Activated naive CD4-positive, alpha-beta T cell treated with anti-CD3 and anti-CD28 coated beads for 36 hours (primary cell): ENCODE measurements at regions of chr9 and their contacts with region 1.

Region 1: GRCh38 chr9:5582835-5583195 is 46.1 kb upstream of the RIC1 start:
- DNase-seq: peak; percentile 72
- H3K4me3 Mint-ChIP-seq: peak overlapping the region; percentile 27
- H3K27ac Mint-ChIP-seq: peak overlapping the region; percentile 78
- H3K4me1 Mint-ChIP-seq: peaks cover 66% of the 10 kb centered on the region
- H3K27me3 Mint-ChIP-seq: no peaks in the 10 kb centered on the region

Region 2: DNA sequence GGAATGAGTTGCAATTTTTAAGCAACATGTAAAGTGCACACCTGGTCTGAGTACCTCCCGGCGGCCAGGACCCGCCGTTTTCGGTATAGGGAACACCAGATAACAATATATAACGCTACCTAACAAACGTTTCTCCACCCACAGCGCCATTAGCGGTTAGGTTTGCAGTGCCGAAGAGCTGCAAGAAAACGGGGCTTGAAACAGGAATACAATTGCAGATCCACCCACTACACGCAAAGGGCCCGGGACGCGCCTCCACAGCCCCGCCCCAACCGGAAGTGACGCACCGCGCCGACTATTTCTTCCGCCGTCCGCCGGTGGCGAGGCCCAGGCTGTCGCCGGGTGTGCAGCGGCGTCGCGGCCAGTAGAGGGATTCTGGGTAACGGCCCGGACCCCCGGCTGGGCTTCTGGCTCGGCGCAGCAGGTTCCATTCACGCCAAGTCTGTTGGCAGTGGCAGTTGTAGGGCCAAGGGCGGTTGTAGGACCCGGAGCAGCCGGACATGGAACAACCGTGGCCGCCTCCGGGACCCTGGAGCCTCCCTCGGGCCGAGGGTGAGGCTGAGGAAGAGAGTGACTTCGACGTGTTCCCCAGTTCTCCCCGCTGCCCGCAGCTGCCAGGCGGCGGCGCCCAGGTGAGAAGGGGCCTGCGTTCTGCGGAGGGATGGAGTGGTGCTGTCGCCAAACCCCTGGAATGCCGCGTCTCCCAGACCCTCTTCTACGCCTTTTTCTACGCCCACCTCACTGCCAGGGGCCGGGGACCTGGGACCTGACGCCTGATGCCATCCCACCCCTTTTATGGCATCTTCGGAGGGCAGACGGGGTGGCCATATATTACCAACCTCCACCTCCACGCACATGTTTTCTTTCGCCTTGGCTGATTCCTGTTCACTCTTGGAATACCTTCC is 903.3 kb before region 1 on chr9 and contains the start of gene CDC37L1:
- CTCF ChIA-PET with region 1: no interaction called
- intact Hi-C with region 1: loop called (anchors 10 kb)
- DNase-seq: peak; percentile 99
- H3K4me3 Mint-ChIP-seq: no peak within 1 kb of the TSS
- H3K27ac Mint-ChIP-seq: no peak within 1 kb of the TSS
- H3K4me1 Mint-ChIP-seq: peaks cover 17% of the 10 kb centered on the region
- H3K27me3 Mint-ChIP-seq: no peaks in the 10 kb centered on the region
- total RNA-seq, gene CDC37L1: 13.7 to 14.5 TPM

Region 3: DNA sequence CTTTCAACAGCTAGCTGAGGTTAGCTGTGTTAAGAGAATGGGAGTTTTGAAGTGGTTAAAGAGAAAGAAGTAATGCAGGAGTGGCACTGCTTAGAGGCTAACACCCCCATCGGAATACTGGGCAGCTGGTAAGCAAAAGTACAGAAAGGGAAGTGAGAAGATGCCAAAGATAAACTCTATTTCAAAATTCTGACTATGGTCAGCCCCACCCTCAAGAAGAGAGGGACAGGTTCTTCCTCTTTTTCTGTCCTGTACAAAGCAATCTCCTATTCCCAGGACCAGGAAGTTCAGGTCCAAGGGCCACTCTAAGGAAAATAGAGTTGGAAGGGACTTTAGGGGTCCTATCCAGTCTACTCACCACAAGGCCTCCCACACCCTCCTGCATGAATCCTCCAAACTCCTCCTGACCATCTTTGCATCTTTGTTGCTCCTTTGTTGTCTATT is 643.7 kb before region 1 on chr9:
- CTCF ChIA-PET with region 1: no interaction called
- intact Hi-C with region 1: loop called (anchors 5 kb)
- DNase-seq: no peak
- H3K4me3 Mint-ChIP-seq: no peak overlapping the region
- H3K27ac Mint-ChIP-seq: peak overlapping the region; percentile 88
- H3K4me1 Mint-ChIP-seq: peaks cover 79% of the 10 kb centered on the region
- H3K27me3 Mint-ChIP-seq: no peaks in the 10 kb centered on the region

Region 4: DNA sequence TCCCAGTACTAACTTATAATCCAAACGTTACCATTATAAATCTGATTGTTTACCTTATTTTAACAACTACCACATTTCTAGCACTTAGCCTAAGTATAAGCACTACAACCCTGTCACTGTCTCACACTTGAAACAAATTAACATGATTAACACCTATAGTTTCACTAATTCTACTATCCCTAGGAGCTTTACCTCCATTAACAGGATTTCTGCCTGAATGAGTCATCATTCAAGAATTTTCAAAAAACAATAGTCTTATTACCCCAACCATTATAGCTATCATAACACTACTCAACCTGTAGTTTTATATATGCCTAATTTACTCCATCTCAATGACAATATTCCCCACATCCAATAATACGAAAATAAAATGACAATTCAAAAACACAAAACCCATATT is 487.0 kb before region 1 on chr9:
- CTCF ChIA-PET with region 1: no interaction called
- intact Hi-C with region 1: no loop called
- DNase-seq: no peak
- H3K4me3 Mint-ChIP-seq: no peak overlapping the region
- H3K27ac Mint-ChIP-seq: no peak overlapping the region
- H3K4me1 Mint-ChIP-seq: no peaks in the 10 kb centered on the region
- H3K27me3 Mint-ChIP-seq: no peaks in the 10 kb centered on the region

Region 5: GRCh38 chr9:5110867-5111713 is 471.7 kb before region 1 on chr9:
- CTCF ChIA-PET with region 1: no interaction called
- intact Hi-C with region 1: no loop called
- DNase-seq: no peak
- H3K4me3 Mint-ChIP-seq: no peak overlapping the region
- H3K27ac Mint-ChIP-seq: no peak overlapping the region
- H3K4me1 Mint-ChIP-seq: no peaks in the 10 kb centered on the region
- H3K27me3 Mint-ChIP-seq: no peaks in the 10 kb centered on the region

Region 6: DNA sequence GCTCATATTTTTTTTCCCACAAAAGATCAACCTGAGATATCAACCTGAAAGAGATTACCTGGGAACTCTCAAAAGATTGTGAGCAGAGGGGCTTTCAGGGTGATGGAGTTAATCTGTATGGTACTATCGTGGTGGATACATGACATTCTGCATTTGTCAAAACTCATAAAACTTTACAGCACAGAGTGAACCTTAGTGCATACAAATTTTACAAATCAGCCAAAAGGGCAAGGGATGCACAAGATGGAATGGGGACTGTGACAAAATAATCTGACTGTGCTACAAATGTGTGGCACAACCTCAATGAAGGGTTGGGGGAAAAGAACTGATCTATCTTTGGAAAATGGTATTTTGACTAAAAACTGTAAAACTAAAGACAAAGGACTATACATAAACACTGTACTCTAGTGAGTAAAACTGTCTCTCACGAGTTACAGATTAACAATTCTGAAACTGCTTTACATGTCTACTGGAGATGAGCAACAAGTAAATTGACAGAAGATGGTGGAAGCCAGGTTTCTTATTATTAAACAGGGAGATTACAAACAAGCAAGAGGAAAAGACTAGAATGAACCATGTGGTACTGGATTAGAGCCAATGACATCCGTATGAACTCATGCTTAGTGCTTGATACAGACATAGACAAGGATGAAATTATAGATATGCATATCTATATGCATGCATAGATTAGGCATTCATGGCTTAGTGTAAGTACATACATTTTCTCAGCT is 218.4 kb before region 1 on chr9:
- CTCF ChIA-PET with region 1: no interaction called
- intact Hi-C with region 1: loop called (anchors 1 kb)
- DNase-seq: peak; percentile 22
- H3K4me3 Mint-ChIP-seq: no peak overlapping the region
- H3K27ac Mint-ChIP-seq: peak overlapping the region; percentile 35
- H3K4me1 Mint-ChIP-seq: peaks cover 25% of the 10 kb centered on the region
- H3K27me3 Mint-ChIP-seq: no peaks in the 10 kb centered on the region

Region 7: DNA sequence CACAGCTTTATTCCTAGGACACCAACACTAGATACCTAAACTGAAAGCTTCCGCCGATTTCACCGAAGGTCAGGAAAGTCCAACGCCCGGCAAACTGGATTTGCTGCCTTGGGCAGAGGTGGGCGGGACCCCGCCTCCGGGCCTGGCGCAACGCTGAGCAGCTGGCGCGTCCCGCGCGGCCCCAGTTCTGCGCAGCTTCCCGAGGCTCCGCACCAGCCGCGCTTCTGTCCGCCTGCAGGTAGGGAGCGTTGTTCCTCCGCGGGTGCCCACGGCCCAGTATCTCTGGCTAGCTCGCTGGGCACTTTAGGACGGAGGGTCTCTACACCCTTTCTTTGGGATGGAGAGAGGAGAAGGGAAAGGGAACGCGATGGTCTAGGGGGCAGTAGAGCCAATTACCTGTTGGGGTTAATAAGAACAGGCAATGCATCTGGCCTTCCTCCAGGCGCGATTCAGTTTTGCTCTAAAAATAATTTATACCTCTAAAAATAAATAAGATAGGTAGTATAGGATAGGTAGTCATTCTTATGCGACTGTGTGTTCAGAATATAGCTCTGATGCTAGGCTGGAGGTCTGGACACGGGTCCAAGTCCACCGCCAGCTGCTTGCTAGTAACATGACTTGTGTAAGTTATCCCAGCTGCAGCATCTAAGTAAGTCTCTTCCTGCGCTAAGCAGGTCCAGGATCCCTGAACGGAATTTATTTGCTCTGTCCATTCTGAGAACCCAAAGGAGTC is 132.3 kb before region 1 on chr9 and contains the start of gene CD274:
- CTCF ChIA-PET with region 1: interaction called, 79 read pairs
- intact Hi-C with region 1: loop called (anchors 1 kb)
- DNase-seq: peak; percentile 83
- H3K4me3 Mint-ChIP-seq: peak within 1 kb of the TSS; percentile 89
- H3K27ac Mint-ChIP-seq: peak within 1 kb of the TSS; percentile 92
- H3K4me1 Mint-ChIP-seq: peaks cover 65% of the 10 kb centered on the region
- H3K27me3 Mint-ChIP-seq: no peaks in the 10 kb centered on the region
- total RNA-seq, gene CD274: 14.2 to 15.0 TPM

Region 8: GRCh38 chr9:5510360-5510931 is 72.4 kb before region 1 on chr9 and contains the start of gene PDCD1LG2:
- CTCF ChIA-PET with region 1: interaction called, 15 read pairs
- intact Hi-C with region 1: loop called (anchors 1 kb)
- DNase-seq: peak; percentile 59
- H3K4me3 Mint-ChIP-seq: peak within 1 kb of the TSS; percentile 27
- H3K27ac Mint-ChIP-seq: peak within 1 kb of the TSS; percentile 54
- H3K4me1 Mint-ChIP-seq: peaks cover 31% of the 10 kb centered on the region
- H3K27me3 Mint-ChIP-seq: no peaks in the 10 kb centered on the region
- total RNA-seq, gene PDCD1LG2: 0.10 TPM in 1 of 2 experiments, not detected in the other

Region 9: DNA sequence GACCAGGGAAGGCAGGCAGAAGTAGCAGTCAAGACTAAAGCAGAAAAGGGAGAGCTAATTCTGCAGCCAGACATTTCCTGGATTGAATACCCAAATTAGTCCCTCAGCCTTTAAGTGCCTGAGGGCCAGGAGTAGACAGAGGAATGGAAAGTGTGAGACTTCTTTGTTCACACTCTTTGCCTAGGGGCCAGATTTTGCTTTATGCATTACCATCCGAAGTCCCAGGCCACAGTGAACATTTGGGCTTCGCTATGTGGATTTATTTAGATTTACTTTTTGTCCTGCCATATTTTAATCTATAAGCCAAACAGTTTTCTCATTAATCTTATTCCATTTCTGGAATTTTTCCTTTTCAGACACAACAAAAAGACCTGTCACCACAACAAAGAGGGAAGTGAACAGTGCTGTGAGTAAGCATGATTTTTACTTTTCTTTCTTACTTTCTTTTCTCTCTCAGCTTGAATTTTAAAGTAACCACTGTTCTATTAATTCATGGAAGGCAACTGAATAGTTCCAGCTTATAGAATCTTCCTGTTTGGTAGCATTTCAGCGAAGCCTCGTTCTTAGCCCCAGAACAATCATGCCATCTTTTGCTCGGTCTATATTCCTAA is 19.9 kb before region 1 on chr9:
- CTCF ChIA-PET with region 1: interaction called, 4 read pairs
- intact Hi-C with region 1: loop called (anchors 1 kb)
- DNase-seq: no peak
- H3K4me3 Mint-ChIP-seq: no peak overlapping the region
- H3K27ac Mint-ChIP-seq: no peak overlapping the region
- H3K4me1 Mint-ChIP-seq: peaks cover 43% of the 10 kb centered on the region
- H3K27me3 Mint-ChIP-seq: no peaks in the 10 kb centered on the region

Region 10: GRCh38 chr9:5608298-5609225 is 25.7 kb after region 1 on chr9:
- CTCF ChIA-PET with region 1: no interaction called
- intact Hi-C with region 1: no loop called
- DNase-seq: no peak
- H3K4me3 Mint-ChIP-seq: peak overlapping the region; percentile 60
- H3K27ac Mint-ChIP-seq: no peak overlapping the region
- H3K4me1 Mint-ChIP-seq: peaks cover 22% of the 10 kb centered on the region
- H3K27me3 Mint-ChIP-seq: no peaks in the 10 kb centered on the region